Astrocyte of the cerebellum (primary cell): ENCODE measurements at regions of chr10 and their contacts with region 1.

Region 1: DNA sequence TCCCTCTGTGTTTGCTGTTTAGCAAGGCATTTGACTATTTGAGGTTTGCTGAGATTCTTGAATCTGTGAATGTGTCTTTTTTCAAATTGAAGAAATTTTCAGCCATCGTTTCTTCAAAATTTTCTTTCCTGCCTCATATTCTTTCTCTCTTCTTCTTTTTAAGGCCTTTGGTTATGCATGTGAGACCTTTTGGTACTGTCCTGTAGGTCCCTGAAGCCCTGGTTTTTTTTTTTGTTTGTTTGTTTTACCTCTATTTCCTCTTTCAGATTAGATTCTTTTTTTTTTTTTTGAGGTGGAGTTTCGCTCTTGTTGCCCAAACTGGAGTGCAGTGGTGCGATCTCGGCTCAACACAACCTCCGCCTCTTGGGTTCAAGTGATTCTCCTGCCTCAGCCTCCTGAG is 45.3 kb downstream of the MLLT10 start:
- DNase-seq: no peak
- H3K4me3 ChIP-seq: no peak overlapping the region
- CTCF ChIP-seq: no peak

Region 2: DNA sequence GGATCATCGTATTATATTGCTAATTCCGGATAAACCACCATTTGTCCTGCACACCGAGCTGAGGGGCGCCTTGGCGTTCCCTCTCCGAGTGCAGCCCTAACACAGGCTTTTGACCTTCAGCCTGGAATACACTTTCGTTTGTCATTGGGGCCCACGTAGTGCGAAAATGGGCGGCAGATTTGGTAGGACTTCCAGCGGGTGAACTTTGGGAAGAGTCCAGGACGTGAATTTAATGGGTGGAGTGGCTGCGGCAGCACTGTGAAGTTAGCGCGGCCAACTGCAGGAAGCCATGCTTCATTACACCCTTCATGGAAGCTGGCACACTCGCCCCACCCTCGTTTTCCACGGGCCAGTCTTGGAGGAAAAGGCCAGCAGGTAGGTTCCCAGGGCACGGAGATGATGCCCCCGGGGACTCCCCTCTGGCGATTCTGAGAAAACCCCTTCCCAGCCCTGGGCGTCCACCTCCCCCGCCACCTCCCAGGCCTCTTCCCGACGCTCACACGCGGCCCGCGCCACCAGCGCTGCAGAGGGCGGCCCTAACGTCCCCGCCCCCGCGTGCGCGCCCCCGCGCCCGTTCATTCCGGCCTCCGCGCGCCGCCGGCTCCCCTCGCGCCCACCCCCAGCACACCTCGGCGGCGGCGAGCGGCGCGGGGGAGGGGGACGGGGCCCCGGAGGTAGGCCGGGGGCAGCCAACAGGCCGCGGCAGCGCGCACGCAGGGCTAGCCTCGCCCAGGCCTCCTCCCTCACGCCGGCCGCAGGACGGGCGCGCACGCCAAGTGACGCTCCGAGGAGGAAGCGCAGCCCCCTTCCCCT is 45.6 kb before region 1 on chr10 and contains the start of gene MLLT10:
- in situ Hi-C with region 1: no loop called
- DNase-seq: peak; percentile 88
- H3K4me3 ChIP-seq: peak within 1 kb of the TSS; percentile 58
- CTCF ChIP-seq: peak; percentile 20

Region 3: GRCh38 chr10:21547246-21547645 is 32.0 kb before region 1 on chr10:
- in situ Hi-C with region 1: no loop called
- DNase-seq: no peak
- H3K4me3 ChIP-seq: no peak overlapping the region
- CTCF ChIP-seq: no peak

Region 4: DNA sequence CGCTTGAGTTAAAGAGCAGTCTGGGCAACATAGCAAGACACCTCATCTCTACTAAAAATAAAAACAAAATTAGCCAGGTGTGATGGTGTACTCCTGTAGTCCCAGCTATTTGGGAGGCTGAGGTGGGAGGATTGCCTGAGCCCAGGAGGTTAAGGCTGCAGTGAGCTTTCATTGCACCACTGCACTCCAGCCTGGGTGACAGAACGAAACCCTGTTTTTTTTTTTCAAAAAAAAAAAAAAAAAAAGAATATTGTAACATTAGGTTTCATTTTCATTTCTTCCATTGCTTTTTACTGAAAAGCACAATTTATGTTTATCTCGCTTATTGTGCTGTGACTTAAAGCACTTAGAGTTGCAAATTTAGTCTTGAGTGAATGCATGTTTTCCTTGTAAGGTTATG is 34.7 kb after region 1 on chr10:
- in situ Hi-C with region 1: loop called (anchors 5 kb)
- DNase-seq: no peak
- H3K4me3 ChIP-seq: no peak overlapping the region
- CTCF ChIP-seq: no peak

Region 5: GRCh38 chr10:21675157-21675796 is 96.0 kb after region 1 on chr10:
- in situ Hi-C with region 1: no loop called
- DNase-seq: peak; percentile 3
- H3K4me3 ChIP-seq: no peak overlapping the region
- CTCF ChIP-seq: peak; percentile 71